Heart left ventricle (tissue), 16 donors: ENCODE measurements at regions of chr3 and their contacts with region 1.

Region 1: GRCh38 chr3:172039436-172040077 is at the start of gene FNDC3B:
- DNase-seq: peak; percentile 95 to 97 (median 95)
- ATAC-seq: peak; percentile 84 to 93 (median 90)
- H3K4me3 ChIP-seq: peak within 1 kb of the TSS; percentile 65 to 100 (median 92)
- H3K27ac ChIP-seq: peak within 1 kb of the TSS; percentile 97 to 100 (median 99)
- H3K4me1 ChIP-seq: peaks cover 0 to 45% (median 34%) of the 10 kb centered on the region in 12 donors
- H3K27me3 ChIP-seq: no peaks in the 10 kb centered on the region
- CTCF ChIP-seq: no peak
- POLR2A ChIP-seq: peak; percentile 67 to 96
- total RNA-seq, gene FNDC3B: 59.1 to 113 (median 79.0) TPM

Region 2: DNA sequence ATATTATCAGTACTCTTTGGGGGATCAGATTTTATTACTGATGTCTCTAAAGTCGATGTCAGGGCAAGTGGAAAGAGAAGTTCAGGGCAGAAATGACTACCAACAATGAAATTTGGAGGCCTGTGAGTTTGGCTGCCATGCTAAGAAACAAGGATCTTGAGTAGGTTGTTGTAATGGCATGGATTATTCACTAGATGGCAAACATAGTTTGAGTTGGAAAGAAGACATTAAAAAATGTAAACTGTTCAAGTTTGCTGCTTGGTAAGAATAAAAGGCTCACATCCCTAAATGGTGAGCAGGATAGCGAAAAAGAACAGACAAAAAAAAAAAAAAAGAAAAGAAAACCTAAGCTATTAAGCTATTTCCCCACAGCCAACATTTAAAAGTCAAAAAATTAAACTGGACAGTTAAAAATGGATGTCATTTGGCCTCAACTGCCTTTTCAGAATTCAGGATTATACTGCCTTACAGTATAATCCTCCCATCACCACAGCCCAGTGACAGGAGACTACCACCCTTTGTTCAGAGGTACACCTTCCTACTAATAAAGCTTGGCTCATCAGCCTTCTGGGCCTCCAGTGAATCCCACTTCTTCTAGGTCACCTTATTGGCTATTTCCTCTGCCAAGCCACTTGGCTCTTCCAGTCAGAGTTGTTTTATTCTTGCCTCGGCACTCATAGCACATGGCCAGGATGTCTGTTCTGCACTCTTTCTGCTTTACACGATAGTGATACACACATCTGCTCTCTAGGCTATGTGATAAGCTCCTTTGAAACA is 393.0 kb before region 1 on chr3:
- intact Hi-C with region 1: loop called in 2 of 10 experiments (anchors 5 kb)
- DNase-seq: peak in 4 of 5 donors; percentile 34 to 56 (median 48)
- ATAC-seq: peak; percentile 62 to 91 (median 86)
- H3K4me3 ChIP-seq: no peak overlapping the region
- H3K27ac ChIP-seq: peak overlapping the region in 11 of 12 donors; percentile 10 to 84 (median 57)
- H3K4me1 ChIP-seq: peaks cover 0 to 57% (median 22%) of the 10 kb centered on the region in 12 donors
- H3K27me3 ChIP-seq: no peaks in the 10 kb centered on the region
- CTCF ChIP-seq: peak; percentile 50 to 74 (median 60)
- POLR2A ChIP-seq: no peak

Region 3: DNA sequence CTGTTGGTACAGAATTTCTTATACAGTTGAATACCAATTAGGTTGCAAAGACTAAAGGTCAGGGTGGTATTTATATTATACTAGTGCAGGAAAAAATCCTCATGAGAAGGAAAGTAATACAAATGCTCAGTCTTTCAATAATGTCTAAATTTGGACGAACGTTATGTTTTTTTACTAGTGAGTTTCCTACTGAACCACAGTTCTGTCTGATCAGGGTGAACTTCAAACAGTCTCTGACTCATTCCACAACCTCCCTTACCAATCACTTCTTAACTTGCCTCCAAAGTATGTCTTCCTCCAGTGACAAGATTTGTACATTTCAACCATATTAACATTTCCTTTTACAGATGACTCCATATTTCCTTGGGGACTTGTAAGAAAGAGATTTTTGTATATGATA is 193.0 kb before region 1 on chr3:
- intact Hi-C with region 1: loop called in 2 of 10 experiments (anchors 5 to 10 kb)
- DNase-seq: no peak
- ATAC-seq: no peak
- H3K4me3 ChIP-seq: no peak overlapping the region
- H3K27ac ChIP-seq: no peak overlapping the region
- H3K4me1 ChIP-seq: peaks cover 0 to 37% (median 9%) of the 10 kb centered on the region in 12 donors
- H3K27me3 ChIP-seq: no peaks in the 10 kb centered on the region
- CTCF ChIP-seq: no peak
- POLR2A ChIP-seq: no peak

Region 4: DNA sequence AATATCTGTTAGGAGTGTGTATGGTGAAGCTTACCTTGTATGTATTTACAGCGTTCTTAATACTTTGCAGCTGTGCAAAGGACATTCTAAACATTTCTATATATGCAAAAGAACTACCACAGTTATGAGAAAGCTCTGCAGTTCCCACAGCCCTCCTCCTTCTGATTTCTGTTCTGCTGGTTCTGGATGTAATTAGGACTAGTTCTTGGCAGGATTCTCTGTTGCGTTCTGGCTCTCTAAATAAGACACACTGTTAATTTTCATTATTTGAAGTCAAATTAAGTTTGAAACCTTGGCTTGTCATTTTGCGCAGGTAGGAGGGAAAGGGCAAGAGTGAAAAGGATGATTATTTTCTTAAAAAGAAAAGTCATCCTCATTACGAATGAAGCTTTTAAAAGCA is 76.2 kb after region 1 on chr3:
- intact Hi-C with region 1: loop called in 3 of 10 experiments (anchors 10 kb)
- DNase-seq: no peak
- ATAC-seq: no peak
- H3K4me3 ChIP-seq: no peak overlapping the region
- H3K27ac ChIP-seq: no peak overlapping the region
- H3K4me1 ChIP-seq: peaks cover 0 to 19% (median 8%) of the 10 kb centered on the region in 12 donors
- H3K27me3 ChIP-seq: no peaks in the 10 kb centered on the region
- CTCF ChIP-seq: no peak
- POLR2A ChIP-seq: no peak

Region 5: GRCh38 chr3:172153335-172153861 is 113.8 kb after region 1 on chr3:
- intact Hi-C with region 1: loop called in 1 of 10 experiments (anchors 10 kb)
- DNase-seq: peak; percentile 89 to 96 (median 91)
- ATAC-seq: peak; percentile 96 to 100 (median 98)
- H3K4me3 ChIP-seq: no peak overlapping the region
- H3K27ac ChIP-seq: peak overlapping the region; percentile 69 to 90 (median 86)
- H3K4me1 ChIP-seq: peaks cover 20 to 80% (median 58%) of the 10 kb centered on the region in 12 donors
- H3K27me3 ChIP-seq: no peaks in the 10 kb centered on the region
- CTCF ChIP-seq: no peak
- POLR2A ChIP-seq: peak in 1 of 2 donors; percentile 55

Region 6: GRCh38 chr3:172317984-172318383 is 278.4 kb after region 1 on chr3:
- intact Hi-C with region 1: loop called in 2 of 10 experiments (anchors 5 to 10 kb)
- DNase-seq: peak; percentile 71 to 82 (median 75)
- ATAC-seq: peak; percentile 21 to 74 (median 72)
- H3K4me3 ChIP-seq: no peak overlapping the region
- H3K27ac ChIP-seq: peak overlapping the region; percentile 61 to 91 (median 83)
- H3K4me1 ChIP-seq: peaks cover 20 to 96% (median 91%) of the 10 kb centered on the region in 12 donors
- H3K27me3 ChIP-seq: no peaks in the 10 kb centered on the region
- CTCF ChIP-seq: no peak
- POLR2A ChIP-seq: no peak

Region 7: DNA sequence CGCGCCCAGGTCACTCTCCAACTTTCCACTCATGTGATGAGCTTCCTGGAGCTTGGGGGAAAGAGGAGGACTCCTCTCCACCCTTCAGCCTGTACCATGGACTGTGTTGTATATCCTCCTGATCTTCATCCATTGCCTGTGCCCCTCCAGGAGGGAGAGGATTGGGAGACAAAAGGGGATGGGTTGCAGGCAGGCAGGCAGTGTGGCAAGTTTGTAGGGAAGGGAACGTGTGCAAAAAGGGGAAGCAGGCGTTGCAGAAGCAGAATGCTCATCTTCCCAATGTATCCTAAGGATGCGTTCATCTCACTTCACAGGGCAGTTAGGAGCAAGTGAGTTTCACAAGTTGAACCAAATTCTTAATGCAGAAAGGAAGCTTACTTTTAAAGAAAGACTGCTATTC is 436.8 kb after region 1 on chr3:
- intact Hi-C with region 1: loop called in 1 of 10 experiments (anchors 10 kb)
- DNase-seq: no peak
- ATAC-seq: peak; percentile 17 to 51 (median 30)
- H3K4me3 ChIP-seq: peak overlapping the region in 8 of 12 donors; percentile 17 to 63 (median 52)
- H3K27ac ChIP-seq: peak overlapping the region in 3 of 12 donors; percentile 27 to 67 (median 59)
- H3K4me1 ChIP-seq: peaks cover 0 to 20% (median 0%) of the 10 kb centered on the region in 12 donors
- H3K27me3 ChIP-seq: no peaks in the 10 kb centered on the region
- CTCF ChIP-seq: no peak
- POLR2A ChIP-seq: no peak